Activated T-helper 1 cell treated with anti-CD3 and anti-CD28 coated beads, Interleukin-12 subunit alpha, Interleukin-12 subunit beta, Interleukin-2, Interleukin-4 antibody, amounts not matched to agents 30 ng/mL and 10 ng/mL and 1 ng/mL, durations not matched to agents 14 hours and 24 hours and 36 hours (primary cell): ENCODE measurements at regions of chr15 and their contacts with region 1.

Region 1: GRCh38 chr15:70528270-70528706 is 235.1 kb downstream of the UACA start:
- DNase-seq: peak; percentile 60
- H3K4me3 Mint-ChIP-seq: peak overlapping the region; percentile 27
- H3K27ac Mint-ChIP-seq: peak overlapping the region; percentile 50
- H3K4me1 Mint-ChIP-seq: peaks cover 32% of the 10 kb centered on the region
- H3K27me3 Mint-ChIP-seq: peaks cover 11% of the 10 kb centered on the region

Region 2: DNA sequence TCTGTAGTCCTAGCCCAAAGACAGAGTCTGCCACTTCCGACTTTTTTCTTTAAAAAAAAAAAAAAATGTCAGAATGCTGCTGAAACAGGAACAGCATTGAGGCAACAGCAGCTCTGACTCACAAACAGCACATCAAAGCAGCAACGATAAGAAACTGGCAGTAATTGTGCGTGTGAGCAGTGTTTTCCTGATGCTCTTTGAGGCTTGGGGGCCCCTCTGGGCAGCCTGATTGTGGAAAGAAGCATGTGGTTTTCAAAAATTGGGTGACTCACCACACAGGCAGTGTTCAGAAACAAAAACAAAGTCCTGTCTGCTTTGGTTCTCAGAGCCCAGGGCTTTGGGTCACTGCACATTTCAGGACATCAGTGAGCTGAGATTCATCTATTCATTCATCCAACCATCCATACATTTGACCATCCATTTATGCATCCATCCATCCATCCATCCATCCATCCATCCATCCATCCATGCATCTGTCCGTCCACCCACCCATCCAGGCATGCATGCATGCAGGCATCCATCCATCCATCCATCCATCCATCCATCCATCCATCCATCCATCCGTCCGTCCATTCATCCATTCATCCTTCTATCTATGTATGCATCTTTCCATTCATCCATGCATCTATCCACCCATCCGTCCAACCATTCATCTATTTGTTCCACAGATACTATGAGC is 767.3 kb before region 1 on chr15:
- intact Hi-C with region 1: loop called (anchors 1 kb)
- DNase-seq: peak; percentile 79
- H3K4me3 Mint-ChIP-seq: peak overlapping the region; percentile 72
- H3K27ac Mint-ChIP-seq: peak overlapping the region; percentile 92
- H3K4me1 Mint-ChIP-seq: peaks cover 81% of the 10 kb centered on the region
- H3K27me3 Mint-ChIP-seq: peaks cover 2% of the 10 kb centered on the region

Region 3: DNA sequence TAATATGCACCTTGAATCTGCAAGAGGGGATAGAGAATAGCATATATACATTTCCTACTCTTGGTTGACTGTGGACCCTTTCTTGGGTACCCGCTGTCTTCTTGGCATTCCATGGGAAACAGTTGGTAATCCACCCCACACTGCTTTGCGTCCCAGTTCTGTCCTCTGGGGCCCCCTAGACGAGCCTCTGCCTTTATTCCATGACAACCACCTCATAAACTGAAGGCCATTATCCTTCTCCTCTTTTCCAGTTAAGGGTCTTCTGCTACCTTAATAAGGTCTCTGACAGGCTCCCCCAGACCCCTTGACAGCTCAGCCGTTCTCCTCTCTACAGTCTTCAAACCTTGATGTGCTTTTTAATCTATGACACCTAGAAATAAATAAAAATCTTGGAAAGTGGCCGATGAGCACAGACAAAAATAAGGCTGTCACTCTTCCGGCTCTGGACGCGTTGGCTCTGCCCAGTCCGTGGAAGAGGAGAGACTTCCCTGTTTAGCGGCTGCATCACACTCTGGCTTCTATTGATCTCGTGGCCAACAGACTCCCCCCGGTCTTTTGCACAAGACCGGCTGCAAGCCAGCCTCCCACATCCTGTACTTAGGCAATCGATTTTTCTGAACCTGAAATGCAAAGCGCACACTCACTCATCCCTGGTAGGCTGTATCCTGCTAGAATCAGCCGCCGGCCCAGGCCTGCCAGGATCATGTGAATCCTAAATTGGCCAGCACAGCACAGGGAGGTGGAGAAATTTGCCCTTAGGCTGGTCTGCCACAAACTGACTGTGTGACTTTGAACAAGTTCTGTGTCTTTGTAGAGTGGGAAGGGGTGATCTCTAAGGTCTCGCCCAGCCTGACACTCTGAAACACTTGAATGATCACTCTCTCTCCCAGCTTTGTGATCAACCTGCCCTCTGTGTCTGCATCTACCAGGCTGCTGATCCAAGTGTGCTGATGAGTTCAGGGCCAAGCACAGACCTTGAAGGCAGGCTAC is 179.4 kb before region 1 on chr15:
- intact Hi-C with region 1: no loop called
- DNase-seq: no peak
- H3K4me3 Mint-ChIP-seq: no peak overlapping the region
- H3K27ac Mint-ChIP-seq: no peak overlapping the region
- H3K4me1 Mint-ChIP-seq: no peaks in the 10 kb centered on the region
- H3K27me3 Mint-ChIP-seq: peaks cover 31% of the 10 kb centered on the region

Region 4: DNA sequence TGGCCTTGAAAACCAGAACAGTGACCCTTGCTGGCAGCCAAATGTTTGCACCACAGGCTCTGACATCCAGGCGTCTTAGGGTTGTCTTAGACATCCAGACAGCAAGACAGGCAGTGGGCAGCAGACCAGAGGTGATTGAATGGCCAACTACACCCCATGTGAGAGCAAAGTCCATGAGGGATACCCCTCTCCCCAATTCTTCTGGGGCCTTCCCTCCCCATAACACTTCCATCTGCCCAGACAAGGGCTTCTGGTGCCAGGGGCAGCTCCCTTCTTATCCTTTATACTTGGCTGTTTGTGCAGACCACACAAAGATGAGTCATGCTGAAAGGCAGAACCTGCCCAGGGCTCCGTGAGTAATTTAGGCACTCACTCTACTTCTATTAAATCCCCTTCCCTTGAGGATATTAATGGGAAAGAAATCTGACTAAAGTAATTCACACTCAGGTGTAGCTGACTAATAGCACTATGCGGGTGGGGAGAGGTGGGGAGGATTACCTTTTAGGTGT is 22.8 kb before region 1 on chr15:
- intact Hi-C with region 1: loop called (anchors 1 kb)
- DNase-seq: no peak
- H3K4me3 Mint-ChIP-seq: peak overlapping the region; percentile 42
- H3K27ac Mint-ChIP-seq: peak overlapping the region; percentile 72
- H3K4me1 Mint-ChIP-seq: peaks cover 86% of the 10 kb centered on the region
- H3K27me3 Mint-ChIP-seq: peaks cover 7% of the 10 kb centered on the region

Region 5: GRCh38 chr15:70559265-70560239 is 31.3 kb after region 1 on chr15:
- intact Hi-C with region 1: loop called (anchors 2 kb)
- DNase-seq: peak; percentile 54
- H3K4me3 Mint-ChIP-seq: no peak overlapping the region
- H3K27ac Mint-ChIP-seq: no peak overlapping the region
- H3K4me1 Mint-ChIP-seq: no peaks in the 10 kb centered on the region
- H3K27me3 Mint-ChIP-seq: peaks cover 25% of the 10 kb centered on the region

Region 6: GRCh38 chr15:70569685-70570231 is 41.5 kb after region 1 on chr15:
- intact Hi-C with region 1: no loop called
- DNase-seq: no peak
- H3K4me3 Mint-ChIP-seq: no peak overlapping the region
- H3K27ac Mint-ChIP-seq: no peak overlapping the region
- H3K4me1 Mint-ChIP-seq: peaks cover 6% of the 10 kb centered on the region
- H3K27me3 Mint-ChIP-seq: peaks cover 7% of the 10 kb centered on the region